Panc1 (cell line): ENCODE measurements at regions of chr5 and their contacts with region 1.

Region 1: GRCh38 chr5:154701110-154701572 is 54.0 kb upstream of the LARP1 start:
- DNase-seq: no peak
- ATAC-seq: no peak
- H3K4me3 ChIP-seq: no peak overlapping the region
- H3K27ac ChIP-seq: no peak overlapping the region
- H3K4me1 ChIP-seq: peaks cover 11% of the 10 kb centered on the region
- H3K27me3 ChIP-seq: no peaks in the 10 kb centered on the region
- CTCF ChIP-seq: no peak

Region 2: GRCh38 chr5:154683101-154683880 is 17.9 kb before region 1 on chr5:
- CTCF ChIA-PET with region 1: no interaction called
- POLR2A ChIA-PET with region 1: interaction called, 15 read pairs
- in situ Hi-C with region 1: no loop called
- intact Hi-C with region 1: no loop called
- DNase-seq: no peak
- ATAC-seq: peak; percentile 61
- H3K4me3 ChIP-seq: peak overlapping the region; percentile 61 to 75
- H3K27ac ChIP-seq: peak overlapping the region; percentile 85
- H3K4me1 ChIP-seq: peaks cover 7% of the 10 kb centered on the region
- H3K27me3 ChIP-seq: no peaks in the 10 kb centered on the region
- CTCF ChIP-seq: no peak